ENCODE measurements at regions of chr2 and their contacts with region 1.

Region 1: DNA sequence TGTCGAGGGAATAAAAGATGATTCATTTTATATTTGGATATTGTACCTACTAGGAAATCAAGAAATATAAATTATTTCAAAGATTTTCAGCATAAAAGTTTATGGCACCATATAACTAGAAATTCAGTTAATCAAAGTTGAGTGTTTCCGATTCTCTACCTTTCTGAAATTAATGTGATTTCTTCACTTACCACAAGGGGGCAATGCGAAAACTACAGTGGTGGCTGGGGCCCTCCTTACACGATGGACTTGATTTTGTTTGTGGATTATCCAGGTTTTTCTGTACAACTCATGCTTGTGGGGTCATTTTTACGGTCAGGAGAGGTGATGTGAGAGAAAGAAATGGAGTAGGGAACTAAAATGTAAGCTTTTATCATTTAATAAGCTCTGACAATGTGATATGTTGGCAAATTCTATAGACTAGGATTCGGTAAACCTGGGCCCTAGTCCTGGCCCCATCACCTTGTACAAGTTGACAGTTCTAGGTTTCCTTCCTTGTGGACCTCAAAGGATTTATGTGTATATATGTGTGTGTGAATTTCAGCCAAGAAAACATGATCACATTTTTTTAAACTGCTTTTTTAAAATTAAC is 47.6 kb downstream of the G6PC2 start:
- DNase-seq: no peak
- ATAC-seq: no peak
- H3K4me3 ChIP-seq: no peak overlapping the region
- H3K27ac ChIP-seq: no peak overlapping the region
- H3K4me1 ChIP-seq: no peaks in the 10 kb centered on the region
- H3K27me3 ChIP-seq: no peaks in the 10 kb centered on the region
- CTCF ChIP-seq: peak; percentile 12 to 59 (median 46)

Region 2: GRCh38 chr2:169221745-169222369 is 273.1 kb after region 1 on chr2:
- intact Hi-C with region 1: loop called in 1 of 10 experiments (anchors 5 kb)
- DNase-seq: no peak
- ATAC-seq: no peak
- H3K4me3 ChIP-seq: no peak overlapping the region
- H3K27ac ChIP-seq: no peak overlapping the region
- H3K4me1 ChIP-seq: no peaks in the 10 kb centered on the region
- H3K27me3 ChIP-seq: no peaks in the 10 kb centered on the region
- CTCF ChIP-seq: peak in 6 of 9 donors; percentile 29 to 50 (median 37)

Measured in heart right ventricle (tissue), 16 donors.